Activated naive CD4-positive, alpha-beta T cell treated with anti-CD3 and anti-CD28 coated beads for 36 hours (primary cell): ENCODE measurements at regions of chr2 and their contacts with region 1.

Region 1: DNA sequence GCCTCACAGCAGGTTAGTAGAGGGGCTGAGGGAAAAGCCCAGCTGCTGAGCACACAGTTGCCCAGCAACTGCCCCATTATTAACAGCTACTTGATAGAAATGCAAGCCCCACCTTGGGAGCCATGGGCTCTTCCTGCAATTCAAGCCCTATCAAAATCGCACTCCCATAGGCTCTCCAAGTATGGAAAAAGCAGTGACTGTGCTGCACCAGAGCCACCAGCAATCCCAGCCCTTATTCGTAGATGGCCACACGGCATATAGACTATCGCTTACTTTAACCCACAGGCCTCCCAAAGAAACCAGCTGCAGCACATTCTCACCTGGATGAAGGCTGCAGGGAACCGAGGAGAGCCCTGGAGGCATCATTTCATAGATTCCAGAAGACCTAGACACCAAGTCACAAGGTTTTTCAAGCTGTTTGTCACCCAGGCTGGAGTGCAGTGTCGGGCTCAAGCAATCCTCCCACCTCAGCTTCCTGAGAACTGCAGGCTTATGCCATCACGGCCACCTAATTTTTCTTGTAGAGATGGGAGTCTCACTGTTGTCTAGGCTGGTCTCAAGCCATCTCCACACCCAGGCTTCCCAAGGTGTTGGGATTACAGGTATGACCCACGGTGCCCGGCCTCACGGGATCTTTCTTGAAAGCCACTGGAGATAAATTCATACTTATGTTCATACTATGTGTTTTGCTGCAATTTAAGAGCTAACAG is 11.3 kb downstream of the NCL start:
- DNase-seq: no peak
- H3K4me3 Mint-ChIP-seq: no peak overlapping the region
- H3K27ac Mint-ChIP-seq: peak overlapping the region; percentile 25
- H3K4me1 Mint-ChIP-seq: peaks cover 11% of the 10 kb centered on the region
- H3K27me3 Mint-ChIP-seq: no peaks in the 10 kb centered on the region

Region 2: GRCh38 chr2:231104115-231104713 is 348.7 kb before region 1 on chr2:
- CTCF ChIA-PET with region 1: interaction called, 3 read pairs
- intact Hi-C with region 1: loop called (anchors 1 kb)
- DNase-seq: peak; percentile 77
- H3K4me3 Mint-ChIP-seq: no peak overlapping the region
- H3K27ac Mint-ChIP-seq: no peak overlapping the region
- H3K4me1 Mint-ChIP-seq: peaks cover 12% of the 10 kb centered on the region
- H3K27me3 Mint-ChIP-seq: no peaks in the 10 kb centered on the region

Region 3: GRCh38 chr2:231297108-231297908 is 155.6 kb before region 1 on chr2:
- CTCF ChIA-PET with region 1: interaction called, 4 read pairs
- intact Hi-C with region 1: loop called (anchors 1 kb)
- DNase-seq: peak; percentile 35
- H3K4me3 Mint-ChIP-seq: no peak overlapping the region
- H3K27ac Mint-ChIP-seq: no peak overlapping the region
- H3K4me1 Mint-ChIP-seq: no peaks in the 10 kb centered on the region
- H3K27me3 Mint-ChIP-seq: no peaks in the 10 kb centered on the region

Region 4: DNA sequence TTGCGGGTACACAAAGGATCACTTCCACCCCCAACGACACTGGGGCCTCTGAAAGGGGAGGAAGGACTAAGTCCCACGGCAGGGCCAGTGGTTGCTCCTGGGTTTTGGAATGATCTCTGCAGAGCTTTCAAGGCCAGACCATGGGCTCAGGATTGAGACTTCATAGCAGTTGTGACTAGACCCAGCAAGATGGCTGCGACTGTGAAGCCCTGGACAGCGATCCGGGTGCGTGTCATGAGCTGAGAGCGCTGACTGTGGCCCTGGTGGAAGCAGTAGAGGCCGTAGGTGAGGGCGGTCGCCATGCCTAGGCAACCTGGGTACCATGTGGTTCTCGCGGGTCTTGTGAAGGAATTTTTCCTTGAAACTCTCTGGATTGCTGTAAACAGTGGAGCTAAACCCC is 16.0 kb before region 1 on chr2:
- CTCF ChIA-PET with region 1: interaction called, 11 read pairs
- intact Hi-C with region 1: no loop called
- DNase-seq: no peak
- H3K4me3 Mint-ChIP-seq: no peak overlapping the region
- H3K27ac Mint-ChIP-seq: no peak overlapping the region
- H3K4me1 Mint-ChIP-seq: peaks cover 10% of the 10 kb centered on the region
- H3K27me3 Mint-ChIP-seq: no peaks in the 10 kb centered on the region